ENCODE measurements at regions of chr3 and their contacts with region 1.

Region 1: GRCh38 chr3:106119614-106120082 is 250.8 kb upstream of the CBLB start:
- DNase-seq: peak; percentile 28
- ATAC-seq: peak; percentile 99
- H3K4me3 Mint-ChIP-seq: no peak overlapping the region
- H3K27ac Mint-ChIP-seq: peak overlapping the region; percentile 83
- H3K4me1 Mint-ChIP-seq: peaks cover 26% of the 10 kb centered on the region
- H3K27me3 Mint-ChIP-seq: no peaks in the 10 kb centered on the region

Region 2: GRCh38 chr3:105495021-105495420 is 624.6 kb before region 1 on chr3:
- CTCF ChIA-PET with region 1: no interaction called
- POLR2A ChIA-PET with region 1: no interaction called
- intact Hi-C with region 1: no loop called
- DNase-seq: no peak
- ATAC-seq: no peak
- H3K4me3 Mint-ChIP-seq: no peak overlapping the region
- H3K27ac Mint-ChIP-seq: no peak overlapping the region
- H3K4me1 Mint-ChIP-seq: no peaks in the 10 kb centered on the region
- H3K27me3 Mint-ChIP-seq: no peaks in the 10 kb centered on the region

Region 3: GRCh38 chr3:106129939-106130338 is 10.3 kb after region 1 on chr3:
- CTCF ChIA-PET with region 1: no interaction called
- POLR2A ChIA-PET with region 1: no interaction called
- intact Hi-C with region 1: loop called in 1 of 2 experiments (anchors 1 kb)
- DNase-seq: no peak
- ATAC-seq: no peak
- H3K4me3 Mint-ChIP-seq: no peak overlapping the region
- H3K27ac Mint-ChIP-seq: peak overlapping the region; percentile 48
- H3K4me1 Mint-ChIP-seq: peaks cover 18% of the 10 kb centered on the region
- H3K27me3 Mint-ChIP-seq: no peaks in the 10 kb centered on the region

Region 4: DNA sequence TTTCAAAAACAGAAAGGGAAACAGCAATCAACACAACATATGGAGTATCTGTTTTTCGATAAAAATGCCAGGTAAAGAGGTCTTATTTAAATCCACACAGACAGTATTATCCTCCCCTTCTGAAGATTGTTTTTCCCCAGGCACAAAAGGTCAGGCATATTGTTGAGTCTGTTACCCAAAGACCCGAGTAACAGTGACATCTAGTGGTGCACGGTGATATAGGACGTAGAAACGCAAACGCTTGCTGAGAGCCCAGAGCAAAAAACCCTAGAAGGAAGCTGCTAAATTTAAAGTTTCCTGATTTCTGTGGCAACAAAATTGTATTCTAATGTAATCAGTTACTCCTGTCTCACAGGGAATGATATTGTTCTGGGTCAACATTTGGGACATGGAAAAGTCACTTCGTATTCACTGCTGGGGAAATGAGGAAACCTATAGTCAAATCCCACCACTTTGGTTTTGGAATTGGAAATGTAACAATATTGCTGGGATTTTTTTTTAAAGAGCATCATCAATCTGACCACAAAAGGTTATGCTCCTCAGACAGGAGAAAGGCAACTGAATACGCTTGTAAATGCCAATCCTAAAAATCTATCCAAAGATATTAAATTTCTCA is 944.9 kb after region 1 on chr3:
- CTCF ChIA-PET with region 1: no interaction called
- POLR2A ChIA-PET with region 1: no interaction called
- intact Hi-C with region 1: loop called in 1 of 2 experiments (anchors 10 kb)
- DNase-seq: peak; percentile 80
- ATAC-seq: peak; percentile 85
- H3K4me3 Mint-ChIP-seq: no peak overlapping the region
- H3K27ac Mint-ChIP-seq: no peak overlapping the region
- H3K4me1 Mint-ChIP-seq: peaks cover 19% of the 10 kb centered on the region
- H3K27me3 Mint-ChIP-seq: peaks cover 8% of the 10 kb centered on the region

Measured in activated CD4-positive, alpha-beta T cell treated with anti-CD3 and anti-CD28 coated beads for 36 hours (primary cell).